Endothelial cell of umbilical vein (primary cell): ENCODE measurements at regions of chr19 and their contacts with region 1.

Region 1: GRCh38 chr19:4065430-4066175 is 1.1 kb downstream of the ZBTB7A start:
- DNase-seq: peak; percentile 94
- H3K4me3 ChIP-seq: peak overlapping the region in 1 of 3 experiments; percentile 98
- H3K27ac ChIP-seq: no peak overlapping the region
- H3K4me1 ChIP-seq: peaks cover 11% of the 10 kb centered on the region
- H3K27me3 ChIP-seq: no peaks in the 10 kb centered on the region
- CTCF ChIP-seq: no peak
- POLR2A ChIP-seq: peak; percentile 11

Region 2: DNA sequence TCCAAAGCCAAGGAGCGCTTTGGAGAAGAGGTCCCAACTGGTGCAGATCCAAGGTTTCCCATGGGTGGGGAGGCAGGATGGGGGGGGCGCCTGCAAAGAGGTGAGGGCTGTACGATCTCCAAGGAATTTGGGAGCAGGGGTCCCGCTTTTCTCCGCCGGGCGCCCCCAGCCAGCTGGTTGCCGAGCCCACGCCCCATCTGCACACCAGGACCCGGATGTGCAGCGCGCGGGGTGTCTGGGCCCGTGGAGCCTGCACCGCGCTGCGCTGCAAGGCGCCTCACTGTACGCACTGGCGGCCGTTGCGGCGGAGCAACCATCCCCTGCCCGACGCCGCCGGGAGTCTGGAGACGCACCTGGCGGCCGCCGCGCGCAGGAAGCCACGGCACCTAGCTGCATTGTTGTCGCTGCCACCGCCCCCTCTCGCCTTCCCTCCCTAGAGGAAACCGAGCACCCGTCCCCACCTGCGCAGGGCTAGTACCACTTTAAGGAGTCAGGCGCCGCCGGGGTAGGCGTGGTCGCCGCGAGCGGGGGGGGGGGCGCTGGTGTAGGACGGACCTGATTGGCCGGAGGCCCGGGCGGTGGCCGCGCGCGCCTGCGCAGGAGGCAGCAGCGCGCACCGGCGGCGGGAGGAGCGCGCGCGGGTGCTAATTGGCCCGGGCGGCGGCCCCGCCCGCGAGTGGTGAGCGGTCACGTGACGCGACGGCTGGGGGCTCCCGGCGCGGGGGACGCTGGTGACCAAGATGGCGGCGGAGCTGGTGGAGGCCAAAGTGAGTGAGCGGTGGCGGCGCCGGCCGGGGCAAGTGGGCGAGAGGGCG is 58.4 kb before region 1 on chr19 and contains the start of gene PIAS4:
- CTCF ChIA-PET with region 1: no interaction called
- POLR2A ChIA-PET with region 1: no interaction called
- dilution Hi-C with region 1: no loop called
- intact Hi-C with region 1: loop called (anchors 5 kb)
- DNase-seq: peak; percentile 95
- H3K4me3 ChIP-seq: peak within 1 kb of the TSS; percentile 75 to 97 (median 94)
- H3K27ac ChIP-seq: peak within 1 kb of the TSS; percentile 40
- H3K4me1 ChIP-seq: peaks cover 13% of the 10 kb centered on the region
- H3K27me3 ChIP-seq: no peaks in the 10 kb centered on the region
- CTCF ChIP-seq: no peak
- POLR2A ChIP-seq: peak; percentile 70
- total RNA-seq, gene PIAS4: 46.2 and 47.2 TPM in 2 replicates

Region 3: GRCh38 chr19:4042731-4043082 is 22.9 kb before region 1 on chr19:
- CTCF ChIA-PET with region 1: no interaction called
- POLR2A ChIA-PET with region 1: no interaction called
- dilution Hi-C with region 1: no loop called
- intact Hi-C with region 1: no loop called
- DNase-seq: no peak
- H3K4me3 ChIP-seq: no peak overlapping the region
- H3K27ac ChIP-seq: no peak overlapping the region
- H3K4me1 ChIP-seq: no peaks in the 10 kb centered on the region
- H3K27me3 ChIP-seq: no peaks in the 10 kb centered on the region
- CTCF ChIP-seq: no peak
- POLR2A ChIP-seq: no peak

Region 4: GRCh38 chr19:4123615-4124568 is 58.3 kb after region 1 on chr19 and contains the start of gene MAP2K2:
- CTCF ChIA-PET with region 1: no interaction called
- POLR2A ChIA-PET with region 1: interaction called, 3 read pairs
- dilution Hi-C with region 1: no loop called
- intact Hi-C with region 1: loop called (anchors 5 kb)
- DNase-seq: peak; percentile 89
- H3K4me3 ChIP-seq: peak within 1 kb of the TSS; percentile 89 to 96 (median 94)
- H3K27ac ChIP-seq: peak within 1 kb of the TSS; percentile 66
- H3K4me1 ChIP-seq: peaks cover 14% of the 10 kb centered on the region
- H3K27me3 ChIP-seq: no peaks in the 10 kb centered on the region
- CTCF ChIP-seq: no peak
- POLR2A ChIP-seq: peak; percentile 92
- total RNA-seq, gene MAP2K2: 171 TPM in 2 replicates